GM18951 (cell line): ENCODE measurements at regions of chr11 and their contacts with region 1.

Region 1: DNA sequence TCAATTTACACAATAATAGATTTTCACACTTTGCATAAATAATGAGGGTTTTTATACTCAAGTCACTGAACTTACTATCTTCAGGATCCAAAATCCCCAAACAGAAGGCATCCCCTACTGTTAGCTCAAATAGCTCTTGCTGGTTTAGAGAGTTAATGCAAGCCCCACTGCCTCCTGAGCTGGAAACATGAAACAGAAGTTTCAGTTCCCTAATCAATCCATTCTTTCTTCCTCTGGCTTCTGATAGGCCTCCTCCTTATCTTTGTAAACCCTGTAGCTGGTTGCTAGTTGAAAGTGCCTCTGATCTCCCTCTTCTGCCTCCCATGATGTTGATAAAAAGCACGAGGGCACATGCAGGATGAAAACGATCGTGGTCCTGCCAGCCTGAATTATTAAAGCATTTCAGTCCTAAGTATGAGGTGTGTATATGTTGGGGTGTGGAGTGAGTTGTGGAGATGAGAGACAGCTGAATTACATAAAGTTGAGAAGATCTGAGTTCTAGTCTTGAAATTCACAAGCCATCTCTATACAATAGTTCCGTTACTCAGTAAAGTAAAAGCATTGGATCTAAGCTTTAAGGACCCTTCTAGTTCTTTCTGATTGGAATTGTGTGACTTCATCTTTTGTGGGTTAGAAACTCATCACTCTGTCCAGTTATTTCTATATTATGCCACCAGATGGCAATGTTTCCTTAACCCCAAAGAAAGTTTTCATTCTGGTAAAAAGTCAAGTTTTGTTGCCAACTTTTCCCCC is 35.0 kb upstream of the EHF start:
- POLR2A ChIP-seq: no peak

Region 2: GRCh38 chr11:33936725-33937604 is 648.9 kb before region 1 on chr11:
- in situ Hi-C with region 1: no loop called
- POLR2A ChIP-seq: no peak

Region 3: DNA sequence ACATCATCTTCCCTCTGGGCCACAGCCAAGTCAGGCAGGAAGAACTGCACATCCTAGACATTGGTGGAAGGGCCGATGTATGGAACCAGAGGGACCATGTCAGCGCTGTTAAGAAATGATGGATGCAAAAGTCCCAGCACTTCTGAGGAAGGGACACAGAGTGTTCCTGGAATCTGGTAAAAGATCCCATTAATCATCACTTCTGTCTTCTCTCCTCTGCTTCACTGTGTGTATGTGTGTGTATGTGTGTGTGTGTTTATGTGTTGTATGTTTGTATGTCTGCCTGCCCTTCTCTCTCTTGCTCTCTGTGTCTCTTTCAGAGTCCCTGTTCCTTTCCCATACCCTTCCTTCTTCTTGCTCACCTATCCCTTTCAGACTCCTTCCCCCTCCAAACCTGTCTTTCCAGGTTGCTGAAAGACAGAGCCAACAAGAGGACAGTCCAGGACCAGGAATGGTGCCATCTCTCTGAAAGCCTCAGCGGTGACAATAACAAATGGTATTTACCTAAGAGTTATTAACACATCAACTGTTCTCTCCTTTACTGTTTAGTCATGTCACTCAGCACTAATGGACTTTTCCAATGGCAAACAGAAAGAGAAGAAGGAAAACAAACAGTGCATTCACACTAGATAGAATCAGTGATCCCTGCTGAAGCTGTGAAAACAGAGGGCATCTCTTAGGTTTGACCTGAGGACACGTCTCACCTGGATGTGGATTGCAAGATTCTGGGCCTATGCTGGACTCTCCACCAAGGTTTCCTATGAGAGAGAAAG is 82.1 kb after region 1 on chr11:
- in situ Hi-C with region 1: no loop called
- POLR2A ChIP-seq: no peak

Region 4: GRCh38 chr11:34890812-34891211 is 304.9 kb after region 1 on chr11:
- in situ Hi-C with region 1: loop called (anchors 10 kb)
- POLR2A ChIP-seq: no peak